Natural killer cell (primary cell): ENCODE measurements at regions of chr12 and their contacts with region 1.

Region 1: GRCh38 chr12:57751788-57752667 is at the start of gene CDK4:
- DNase-seq: peak; percentile 96 to 99
- ATAC-seq: peak; percentile 81 to 97 (median 89)
- H3K4me3 ChIP-seq: peak within 1 kb of the TSS; percentile 63
- H3K4me3 Mint-ChIP-seq: peak within 1 kb of the TSS; percentile 89
- H3K27ac ChIP-seq: peak within 1 kb of the TSS; percentile 85
- H3K27ac Mint-ChIP-seq: peak within 1 kb of the TSS; percentile 91 to 92
- H3K4me1 ChIP-seq: peaks cover 43% of the 10 kb centered on the region
- H3K4me1 Mint-ChIP-seq: peaks cover 45 to 49% of the 10 kb centered on the region in 2 donors
- H3K27me3 ChIP-seq: no peaks in the 10 kb centered on the region
- H3K27me3 Mint-ChIP-seq: no peaks in the 10 kb centered on the region
- CTCF ChIP-seq: no peak
- total RNA-seq, gene CDK4: 30.7 to 39.5 (median 37.7) TPM

Region 2: DNA sequence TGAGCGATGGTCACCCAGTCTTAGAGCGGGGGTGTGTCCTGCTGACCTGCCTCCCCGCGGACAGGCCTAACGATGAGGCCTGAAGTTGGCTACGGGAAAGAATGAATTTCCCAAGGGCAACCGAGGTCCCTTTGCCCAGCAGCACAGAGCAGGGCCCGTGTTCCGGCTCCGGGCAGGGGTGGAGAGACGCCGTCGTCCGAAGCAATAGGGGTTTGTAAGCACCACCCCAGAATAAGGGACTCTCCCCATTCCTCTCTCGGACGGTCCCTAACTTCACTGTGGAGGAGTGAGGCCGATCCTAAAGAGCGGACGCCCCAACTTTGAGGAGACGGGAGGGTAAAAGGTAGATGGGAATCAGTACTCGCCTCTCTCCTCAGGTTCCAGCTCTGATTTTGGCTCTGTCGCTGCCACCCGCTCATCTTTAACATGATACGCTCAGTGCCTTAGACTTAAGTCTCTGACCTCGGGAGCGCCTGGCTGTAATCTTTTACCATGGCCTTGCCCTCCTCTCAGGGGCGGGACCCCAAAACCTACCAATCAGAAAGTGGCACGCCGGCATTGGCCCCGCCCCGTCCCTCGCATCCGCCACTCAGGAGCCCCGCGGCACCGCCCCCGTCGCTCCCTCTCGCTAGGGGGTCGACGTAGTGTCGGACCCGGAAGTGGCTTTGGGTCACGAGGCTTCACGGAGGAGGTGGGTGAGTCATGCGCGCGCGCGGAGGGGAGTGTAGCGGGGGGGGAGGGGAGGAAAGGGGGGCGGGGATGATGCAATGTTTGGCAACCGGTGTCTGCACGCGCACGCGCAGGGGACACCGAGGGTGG is 231.8 kb before region 1 on chr12 and contains the start of gene DDIT3:
- intact Hi-C with region 1: loop called (anchors 1 kb)
- DNase-seq: peak; percentile 99 to 100
- ATAC-seq: peak; percentile 71 to 91 (median 78)
- H3K4me3 ChIP-seq: peak within 1 kb of the TSS; percentile 99
- H3K4me3 Mint-ChIP-seq: peak within 1 kb of the TSS; percentile 97
- H3K27ac ChIP-seq: peak within 1 kb of the TSS; percentile 99
- H3K27ac Mint-ChIP-seq: peak within 1 kb of the TSS; percentile 99
- H3K4me1 ChIP-seq: peaks cover 61% of the 10 kb centered on the region
- H3K4me1 Mint-ChIP-seq: peaks cover 36 to 79% of the 10 kb centered on the region in 2 donors
- H3K27me3 ChIP-seq: no peaks in the 10 kb centered on the region
- H3K27me3 Mint-ChIP-seq: no peaks in the 10 kb centered on the region
- CTCF ChIP-seq: no peak
- total RNA-seq, gene DDIT3: 117 to 318 (median 182) TPM

Region 3: DNA sequence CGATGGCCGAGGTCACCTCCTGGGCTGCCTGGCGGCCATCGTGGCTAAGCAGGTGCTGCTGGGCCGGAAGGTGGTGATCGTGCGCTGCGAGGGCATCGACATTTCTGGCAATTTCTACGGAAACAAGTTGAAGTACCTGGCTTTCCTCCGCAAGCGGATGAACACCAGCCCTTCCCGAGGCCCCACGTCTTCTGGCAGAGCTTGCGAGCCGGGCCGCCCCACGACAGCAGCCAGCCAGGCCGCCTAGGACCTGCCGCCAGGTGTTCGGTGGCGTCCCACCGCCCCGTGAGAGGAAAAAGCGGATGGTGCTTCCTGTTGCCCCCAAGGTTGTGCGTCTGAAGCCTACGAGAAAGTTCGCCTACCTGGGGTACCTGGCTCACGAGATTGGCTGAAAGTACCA is 77.3 kb before region 1 on chr12:
- intact Hi-C with region 1: no loop called
- DNase-seq: no peak
- ATAC-seq: no peak
- H3K4me3 ChIP-seq: no peak overlapping the region
- H3K4me3 Mint-ChIP-seq: no peak overlapping the region
- H3K27ac ChIP-seq: no peak overlapping the region
- H3K27ac Mint-ChIP-seq: no peak overlapping the region
- H3K4me1 ChIP-seq: no peaks in the 10 kb centered on the region
- H3K4me1 Mint-ChIP-seq: no peaks in the 10 kb centered on the region
- H3K27me3 ChIP-seq: no peaks in the 10 kb centered on the region
- H3K27me3 Mint-ChIP-seq: peaks cover 0 to 5% of the 10 kb centered on the region in 2 donors
- CTCF ChIP-seq: no peak

Region 4: GRCh38 chr12:57782608-57783465 is 30.8 kb after region 1 on chr12 and contains the start of gene TSFM:
- intact Hi-C with region 1: loop called (anchors 1 kb)
- DNase-seq: peak; percentile 98 to 99
- ATAC-seq: peak; percentile 94 to 97 (median 97)
- H3K4me3 ChIP-seq: peak within 1 kb of the TSS; percentile 86
- H3K4me3 Mint-ChIP-seq: peak within 1 kb of the TSS; percentile 99
- H3K27ac ChIP-seq: peak within 1 kb of the TSS; percentile 57
- H3K27ac Mint-ChIP-seq: peak within 1 kb of the TSS; percentile 90 to 97
- H3K4me1 ChIP-seq: peaks cover 36% of the 10 kb centered on the region
- H3K4me1 Mint-ChIP-seq: peaks cover 33 to 34% of the 10 kb centered on the region in 2 donors
- H3K27me3 ChIP-seq: no peaks in the 10 kb centered on the region
- H3K27me3 Mint-ChIP-seq: no peaks in the 10 kb centered on the region
- CTCF ChIP-seq: peak; percentile 93
- total RNA-seq, gene TSFM: 17.6 to 19.7 (median 17.7) TPM